ENCODE measurements at regions of chr12 and their contacts with region 1.

Region 1: DNA sequence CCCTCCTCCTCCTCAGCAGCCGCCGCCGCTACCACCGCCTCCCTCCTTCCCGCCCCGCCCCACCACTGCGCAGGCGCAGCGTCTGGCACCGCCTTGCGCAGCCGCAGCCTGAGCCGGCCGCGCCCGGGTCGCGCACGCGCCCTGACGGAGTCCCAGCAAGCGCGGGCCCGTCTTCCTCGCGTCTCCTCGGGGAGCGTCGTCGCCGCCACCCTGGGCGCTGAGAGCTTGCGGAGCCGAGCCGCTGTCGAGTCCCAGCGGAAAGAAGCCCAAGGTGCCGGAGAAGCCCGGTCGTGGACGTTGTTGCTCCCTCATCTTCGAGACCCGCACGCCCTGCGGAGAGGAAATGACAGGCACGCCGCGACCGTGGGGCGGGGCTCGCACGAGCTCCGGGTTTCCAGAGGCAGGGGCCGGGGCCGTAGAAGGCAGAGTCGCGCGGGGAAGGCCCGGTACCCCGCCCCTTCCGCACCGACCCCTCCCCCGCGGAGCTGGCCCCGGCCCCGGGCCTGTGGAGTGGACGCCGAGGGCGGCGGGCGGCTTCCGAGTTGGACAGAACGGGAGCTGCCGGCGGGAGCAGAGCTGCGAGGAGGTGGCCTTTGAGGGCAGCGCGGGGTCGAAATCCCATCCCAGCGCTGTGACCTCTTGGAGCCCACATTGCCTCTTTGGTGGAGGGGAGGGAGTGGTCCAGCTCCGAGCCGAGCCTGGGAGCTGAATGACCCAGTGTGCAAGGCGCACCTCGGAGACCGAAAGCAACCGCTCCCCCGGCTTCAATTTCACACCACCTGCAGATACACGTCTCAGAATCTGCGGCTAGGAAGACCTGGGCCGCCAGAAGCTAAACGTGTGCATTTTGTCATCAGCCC is 469 bp upstream of the RAB35 start:
- DNase-seq: peak; percentile 96 to 99 (median 96)
- ATAC-seq: peak; percentile 87 to 95 (median 94)
- H3K4me3 ChIP-seq: peak overlapping the region; percentile 61 to 97 (median 88)
- H3K27ac ChIP-seq: peak overlapping the region; percentile 90 to 99 (median 98)
- H3K4me1 ChIP-seq: peaks cover 7 to 81% (median 34%) of the 10 kb centered on the region in 12 donors
- H3K27me3 ChIP-seq: no peaks in the 10 kb centered on the region
- CTCF ChIP-seq: no peak
- POLR2A ChIP-seq: peak; percentile 12 to 88

Region 2: GRCh38 chr12:120086801-120087621 is 30.0 kb before region 1 on chr12:
- intact Hi-C with region 1: loop called in 1 of 10 experiments (anchors 2 kb)
- DNase-seq: peak; percentile 98 to 99 (median 98)
- ATAC-seq: peak; percentile 95 to 99 (median 98)
- H3K4me3 ChIP-seq: peak overlapping the region in 11 of 12 donors; percentile 34 to 58 (median 46)
- H3K27ac ChIP-seq: peak overlapping the region in 11 of 12 donors; percentile 45 to 80 (median 72)
- H3K4me1 ChIP-seq: peaks cover 0 to 22% (median 8%) of the 10 kb centered on the region in 12 donors
- H3K27me3 ChIP-seq: no peaks in the 10 kb centered on the region
- CTCF ChIP-seq: peak; percentile 94 to 100 (median 98)
- POLR2A ChIP-seq: peak in 1 of 2 donors; percentile 48

Region 3: DNA sequence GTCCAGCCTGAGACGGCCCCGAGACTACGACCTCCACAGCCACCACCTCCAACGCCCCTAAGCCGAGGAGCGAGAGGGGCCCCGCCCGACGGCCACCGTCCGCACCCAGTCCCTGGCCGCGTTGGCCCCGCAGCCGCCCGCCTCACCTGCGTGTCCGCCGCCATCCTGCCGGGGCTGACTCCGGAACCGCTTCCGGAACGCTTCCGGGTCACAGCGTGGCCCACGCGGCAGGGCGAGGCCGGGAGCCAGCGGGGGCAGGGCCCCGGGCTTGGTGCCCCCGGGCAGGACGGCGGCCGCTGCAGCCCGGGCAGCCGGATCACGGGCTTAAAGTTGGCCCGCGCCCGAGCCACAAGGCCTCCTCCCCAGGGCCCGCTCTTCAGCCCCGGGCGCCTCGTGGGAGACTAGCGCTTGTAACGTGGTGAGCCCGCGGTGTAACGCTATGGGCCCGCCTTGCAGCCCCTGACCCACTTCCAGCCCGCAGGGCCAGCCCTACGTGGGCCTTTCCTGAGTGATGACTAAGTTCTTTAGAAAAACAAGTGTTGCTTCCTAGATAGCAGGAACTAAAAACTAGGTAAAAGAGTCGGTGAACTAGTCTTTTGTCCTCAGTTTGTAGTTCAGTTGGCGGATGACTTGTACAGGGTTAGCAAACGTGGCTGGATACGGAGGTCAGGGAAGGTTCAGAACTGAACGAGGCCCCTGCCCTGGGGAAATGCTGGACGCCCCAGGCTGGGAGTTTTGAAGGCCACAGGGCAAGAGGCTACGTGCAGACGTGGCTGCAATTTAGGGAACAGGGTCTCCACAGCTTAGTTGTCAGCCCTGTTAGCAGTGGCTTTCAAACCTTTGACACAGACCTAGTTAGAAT is 77.7 kb after region 1 on chr12 and contains the start of gene GCN1:
- intact Hi-C with region 1: loop called in 1 of 10 experiments (anchors 2 kb)
- DNase-seq: peak; percentile 85 to 94 (median 87)
- ATAC-seq: peak; percentile 74 to 97 (median 95)
- H3K4me3 ChIP-seq: peak within 1 kb of the TSS; percentile 63 to 99 (median 91)
- H3K27ac ChIP-seq: peak within 1 kb of the TSS; percentile 73 to 97 (median 90)
- H3K4me1 ChIP-seq: peaks cover 13 to 55% (median 29%) of the 10 kb centered on the region in 12 donors
- H3K27me3 ChIP-seq: no peaks in the 10 kb centered on the region
- CTCF ChIP-seq: peak in 1 of 12 donors; percentile 6
- POLR2A ChIP-seq: peak in 1 of 2 donors; percentile 89
- total RNA-seq, gene GCN1: 24.4 to 51.7 (median 34.6) TPM

Region 4: GRCh38 chr12:120866108-120866507 is 749.1 kb after region 1 on chr12:
- intact Hi-C with region 1: no loop called
- DNase-seq: no peak
- ATAC-seq: no peak
- H3K4me3 ChIP-seq: no peak overlapping the region
- H3K27ac ChIP-seq: no peak overlapping the region
- H3K4me1 ChIP-seq: peaks cover 0 to 30% (median 16%) of the 10 kb centered on the region in 12 donors
- H3K27me3 ChIP-seq: no peaks in the 10 kb centered on the region
- CTCF ChIP-seq: no peak
- POLR2A ChIP-seq: no peak

Measured in heart left ventricle (tissue), 16 donors.